K562 (cell line): ENCODE measurements at regions of chr9 and their contacts with region 1.

Region 1: DNA sequence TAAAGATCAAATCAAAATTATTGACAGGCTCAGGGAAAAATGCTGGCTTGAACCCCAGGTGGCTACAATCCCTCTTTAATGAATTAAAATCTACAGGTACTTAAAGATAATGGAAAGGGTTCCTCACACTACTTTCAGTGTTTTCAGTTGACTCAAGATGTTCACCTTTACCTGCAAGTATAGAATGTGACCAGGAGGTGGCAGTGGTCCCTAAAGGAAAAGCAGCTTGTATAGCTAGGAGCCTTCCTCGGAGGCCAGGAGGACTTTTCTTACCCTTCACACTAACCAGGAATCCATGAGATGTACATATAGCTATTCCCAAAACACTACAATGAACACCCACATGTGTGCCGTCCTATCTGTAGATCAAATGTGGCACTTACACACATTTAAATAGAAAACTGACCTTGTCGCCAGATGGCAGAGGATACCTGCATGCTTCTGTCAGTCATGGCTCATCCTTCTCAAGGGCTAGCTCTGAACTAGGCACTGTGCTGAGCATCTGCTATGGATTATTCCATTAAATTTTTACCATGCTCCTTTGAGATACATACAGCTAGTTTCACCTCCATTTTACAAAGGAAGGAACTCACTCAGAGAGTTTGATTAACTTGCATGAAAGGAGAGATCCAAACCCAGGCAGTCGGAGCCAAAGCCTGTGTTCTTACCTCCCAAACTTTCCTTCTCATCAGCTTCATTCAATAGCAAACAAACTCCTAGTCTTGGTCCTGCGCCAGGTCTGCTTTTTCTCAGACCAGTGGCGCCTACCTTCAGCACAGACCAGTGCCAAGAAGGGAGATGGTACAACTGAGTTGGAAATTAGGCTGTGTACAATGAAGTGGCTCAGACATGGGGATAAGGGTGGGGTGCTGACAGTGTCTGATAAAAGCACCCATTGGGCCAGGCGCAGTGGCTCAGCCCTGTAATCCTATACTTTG is 24.5 kb downstream of the C9orf152 start:
- DNase-seq: peak; percentile 66 to 76 (median 66)
- ATAC-seq: peak; percentile 95
- H3K4me3 ChIP-seq: no peak overlapping the region
- H3K27ac ChIP-seq: no peak overlapping the region
- H3K4me1 ChIP-seq: no peaks in the 10 kb centered on the region
- H3K27me3 ChIP-seq: peaks cover 0 to 5% of the 10 kb centered on the region in 2 experiments; a peak in 1 of 5 replicates
- CTCF ChIP-seq: peak; percentile 65 to 80 (median 74)
- EP300 ChIP-seq: no peak
- POLR2A ChIP-seq: no peak
- RAD21 ChIP-seq: peak; percentile 89 to 94

Region 2: GRCh38 chr9:110217656-110218099 is 34.2 kb after region 1 on chr9:
- CTCF ChIA-PET with region 1: interaction called, 30 read pairs
- POLR2A ChIA-PET with region 1: no interaction called
- in situ Hi-C with region 1: no loop called
- intact Hi-C with region 1: loop called (anchors 1 kb)
- DNase-seq: peak in 2 of 4 experiments; percentile 24 to 27
- ATAC-seq: peak; percentile 49; the same call in 2 of the 3 replicates
- H3K4me3 ChIP-seq: no peak overlapping the region
- H3K27ac ChIP-seq: no peak overlapping the region
- H3K4me1 ChIP-seq: no peaks in the 10 kb centered on the region; a peak in 1 of 5 replicates
- H3K27me3 ChIP-seq: peaks cover 3 to 18% of the 10 kb centered on the region in 2 experiments; a peak in 3 of 5 replicates
- CTCF ChIP-seq: peak; percentile 48 to 68 (median 65); a peak in 5 of 6 replicates
- EP300 ChIP-seq: no peak
- POLR2A ChIP-seq: no peak
- RAD21 ChIP-seq: peak; percentile 60 to 73

Region 3: GRCh38 chr9:110340314-110340713 is 156.8 kb after region 1 on chr9:
- CTCF ChIA-PET with region 1: no interaction called
- POLR2A ChIA-PET with region 1: no interaction called
- in situ Hi-C with region 1: no loop called
- intact Hi-C with region 1: loop called (anchors 5 kb)
- DNase-seq: peak in 2 of 4 experiments; percentile 28 to 57
- ATAC-seq: peak; percentile 95
- H3K4me3 ChIP-seq: no peak overlapping the region
- H3K27ac ChIP-seq: no peak overlapping the region
- H3K4me1 ChIP-seq: no peaks in the 10 kb centered on the region; a peak in 1 of 5 replicates
- H3K27me3 ChIP-seq: no peaks in the 10 kb centered on the region
- CTCF ChIP-seq: peak; percentile 61 to 79 (median 64)
- EP300 ChIP-seq: no peak
- POLR2A ChIP-seq: no peak
- RAD21 ChIP-seq: peak; percentile 47 to 76

Region 4: GRCh38 chr9:110427497-110428104 is 244.1 kb after region 1 on chr9:
- CTCF ChIA-PET with region 1: interaction called, 3 read pairs
- POLR2A ChIA-PET with region 1: no interaction called
- in situ Hi-C with region 1: no loop called
- intact Hi-C with region 1: loop called (anchors 10 kb)
- DNase-seq: peak; percentile 22 to 66 (median 36)
- ATAC-seq: peak; percentile 91
- H3K4me3 ChIP-seq: no peak overlapping the region
- H3K27ac ChIP-seq: no peak overlapping the region
- H3K4me1 ChIP-seq: peaks cover 0 to 11% of the 10 kb centered on the region in 2 experiments; a peak in 2 of 5 replicates
- H3K27me3 ChIP-seq: no peaks in the 10 kb centered on the region
- CTCF ChIP-seq: peak; percentile 68 to 80 (median 72)
- EP300 ChIP-seq: no peak
- POLR2A ChIP-seq: no peak
- RAD21 ChIP-seq: peak; percentile 32 to 70

Region 5: GRCh38 chr9:111298731-111299598 is 1115.5 kb after region 1 on chr9:
- CTCF ChIA-PET with region 1: interaction called, 8 read pairs
- POLR2A ChIA-PET with region 1: no interaction called
- in situ Hi-C with region 1: loop called (anchors 25 kb)
- intact Hi-C with region 1: loop called (anchors 10 kb)
- DNase-seq: peak; percentile 26 to 54 (median 38)
- ATAC-seq: peak; percentile 85
- H3K4me3 ChIP-seq: no peak overlapping the region
- H3K27ac ChIP-seq: no peak overlapping the region
- H3K4me1 ChIP-seq: no peaks in the 10 kb centered on the region
- H3K27me3 ChIP-seq: no peaks in the 10 kb centered on the region
- CTCF ChIP-seq: peak; percentile 27 to 81 (median 54); a peak in 5 of 6 replicates
- EP300 ChIP-seq: no peak
- POLR2A ChIP-seq: no peak
- RAD21 ChIP-seq: peak; percentile 72 to 88